Activated CD4-positive, alpha-beta memory T cell treated with anti-CD3 and anti-CD28 coated beads for 36 hours (primary cell): ENCODE measurements at regions of chr6 and their contacts with region 1.

Region 1: DNA sequence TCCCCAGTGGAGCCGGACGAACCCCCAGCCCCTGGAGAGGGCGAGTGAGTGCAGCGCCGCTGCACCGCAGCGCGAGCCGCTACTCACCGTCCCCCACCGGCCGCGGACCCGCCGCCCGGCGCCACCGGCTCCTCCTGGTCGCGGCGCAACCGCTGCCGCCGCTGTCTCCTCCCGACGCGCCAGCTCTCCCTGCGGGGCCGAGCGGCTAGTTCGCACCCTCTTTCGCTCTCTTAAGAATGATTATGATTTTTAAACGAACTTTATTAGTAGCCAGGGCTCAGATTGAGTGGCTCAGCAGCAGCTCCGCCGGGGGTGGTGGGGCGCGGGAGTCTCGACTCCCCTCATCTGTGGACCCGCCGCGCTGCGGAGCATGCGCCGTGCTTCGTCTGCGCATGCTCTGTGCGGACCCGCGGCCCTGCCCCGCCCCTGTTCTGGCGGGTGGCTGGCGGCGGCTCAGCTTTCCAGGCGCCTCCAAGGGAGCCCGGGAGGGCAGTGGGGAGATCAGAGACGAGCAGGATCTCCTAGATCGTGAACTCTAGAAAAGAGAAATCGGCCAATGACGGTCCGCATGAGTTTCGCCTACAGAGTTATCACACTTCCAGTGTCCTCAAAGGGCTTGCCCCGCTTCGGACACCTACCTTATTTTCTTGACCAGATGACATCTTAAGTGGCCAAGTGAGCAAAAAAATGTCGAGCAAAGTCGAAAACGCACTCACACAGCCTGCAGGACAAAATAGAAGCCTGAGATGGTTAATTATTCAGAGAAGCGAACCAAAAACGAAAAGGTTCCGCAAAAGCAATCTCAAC is at the start of gene RAB23:
- DNase-seq: peak; percentile 85
- H3K4me3 Mint-ChIP-seq: peak within 1 kb of the TSS; percentile 98
- H3K27ac Mint-ChIP-seq: peak within 1 kb of the TSS; percentile 77
- H3K4me1 Mint-ChIP-seq: peaks cover 10% of the 10 kb centered on the region
- H3K27me3 Mint-ChIP-seq: peaks cover 16% of the 10 kb centered on the region
- total RNA-seq, gene RAB23: 1.7 to 2.2 TPM

Region 2: GRCh38 chr6:56955171-56956045 is 266.7 kb before region 1 on chr6:
- CTCF ChIA-PET with region 1: interaction called, 4 read pairs
- POLR2A ChIA-PET with region 1: no interaction called
- intact Hi-C with region 1: loop called (anchors 2 kb)
- DNase-seq: peak; percentile 81
- H3K4me3 Mint-ChIP-seq: peak overlapping the region; percentile 72
- H3K27ac Mint-ChIP-seq: no peak overlapping the region
- H3K4me1 Mint-ChIP-seq: peaks cover 21% of the 10 kb centered on the region
- H3K27me3 Mint-ChIP-seq: peaks cover 45% of the 10 kb centered on the region

Region 3: DNA sequence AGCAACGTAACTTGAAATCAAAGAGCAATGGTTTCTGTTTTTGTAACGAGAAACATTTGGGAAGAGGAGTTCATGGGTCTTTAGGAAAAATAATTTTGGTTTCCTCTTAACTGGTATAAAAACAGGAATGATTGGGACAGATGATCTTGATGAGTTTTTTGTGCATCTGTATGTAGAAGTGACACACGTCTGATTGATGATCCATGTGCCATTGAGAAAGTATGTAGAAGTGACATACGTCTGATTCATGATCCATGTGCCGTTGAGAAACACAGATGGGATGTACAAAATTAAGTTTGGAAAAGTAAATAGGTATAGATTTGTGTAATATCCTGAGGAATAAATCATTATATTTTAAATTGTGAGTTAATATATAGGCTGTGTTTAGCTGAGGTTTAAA is 173.6 kb before region 1 on chr6:
- CTCF ChIA-PET with region 1: no interaction called
- POLR2A ChIA-PET with region 1: interaction called, 5 read pairs
- intact Hi-C with region 1: loop called (anchors 5 kb)
- DNase-seq: no peak
- H3K4me3 Mint-ChIP-seq: peak overlapping the region; percentile 64
- H3K27ac Mint-ChIP-seq: no peak overlapping the region
- H3K4me1 Mint-ChIP-seq: peaks cover 19% of the 10 kb centered on the region
- H3K27me3 Mint-ChIP-seq: peaks cover 10% of the 10 kb centered on the region

Region 4: GRCh38 chr6:57089687-57090460 is 132.3 kb before region 1 on chr6 and contains the start of gene ZNF451:
- CTCF ChIA-PET with region 1: no interaction called
- POLR2A ChIA-PET with region 1: no interaction called
- intact Hi-C with region 1: loop called (anchors 2 kb)
- DNase-seq: peak; percentile 99
- H3K4me3 Mint-ChIP-seq: peak within 1 kb of the TSS; percentile 85
- H3K27ac Mint-ChIP-seq: peak within 1 kb of the TSS; percentile 92
- H3K4me1 Mint-ChIP-seq: peaks cover 30% of the 10 kb centered on the region
- H3K27me3 Mint-ChIP-seq: no peaks in the 10 kb centered on the region
- total RNA-seq, gene ZNF451: 38.2 to 41.4 TPM

Region 5: DNA sequence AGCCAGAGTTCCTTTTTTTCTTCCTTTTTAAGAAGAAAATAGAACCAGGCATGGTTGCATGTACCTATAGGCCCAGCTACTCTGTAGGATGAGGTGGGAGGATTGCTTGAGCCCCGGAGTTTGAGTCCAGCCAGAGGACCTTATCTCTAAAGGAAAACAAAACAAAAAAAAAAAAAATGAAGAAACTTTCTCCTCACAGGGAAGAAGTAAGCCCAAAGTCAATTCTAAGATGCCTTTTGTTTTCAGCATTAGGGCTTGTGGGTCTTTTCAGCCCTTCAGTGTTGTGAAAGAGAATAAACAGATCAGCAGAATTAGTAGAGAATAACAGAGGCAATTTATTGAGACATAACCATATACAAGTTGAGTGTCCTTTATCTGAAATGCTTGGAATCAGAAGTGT is 105.4 kb before region 1 on chr6:
- CTCF ChIA-PET with region 1: no interaction called
- POLR2A ChIA-PET with region 1: no interaction called
- intact Hi-C with region 1: no loop called
- DNase-seq: no peak
- H3K4me3 Mint-ChIP-seq: no peak overlapping the region
- H3K27ac Mint-ChIP-seq: no peak overlapping the region
- H3K4me1 Mint-ChIP-seq: peaks cover 16% of the 10 kb centered on the region
- H3K27me3 Mint-ChIP-seq: no peaks in the 10 kb centered on the region

Region 6: DNA sequence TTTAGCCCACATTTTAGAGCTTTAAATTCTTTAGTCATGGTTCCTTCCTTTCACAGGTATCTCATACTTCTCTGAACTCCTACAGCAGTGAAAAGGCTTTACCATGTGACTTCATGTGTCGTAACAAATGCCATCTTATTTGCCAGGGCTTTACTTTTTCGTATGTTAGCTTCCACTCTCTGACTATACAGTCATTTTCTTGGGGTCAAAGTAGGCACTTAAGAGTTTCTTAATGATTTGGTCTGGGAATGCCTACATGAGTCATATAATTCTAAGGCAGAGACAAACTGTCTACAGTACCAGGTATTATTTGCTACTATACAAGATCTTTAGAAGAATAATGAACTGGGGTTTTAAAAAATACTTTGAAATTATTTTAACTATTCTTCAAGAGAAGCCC is 15.0 kb before region 1 on chr6:
- CTCF ChIA-PET with region 1: interaction called, 10 read pairs
- POLR2A ChIA-PET with region 1: interaction called, 3 read pairs
- intact Hi-C with region 1: loop called (anchors 2 kb)
- DNase-seq: no peak
- H3K4me3 Mint-ChIP-seq: no peak overlapping the region
- H3K27ac Mint-ChIP-seq: no peak overlapping the region
- H3K4me1 Mint-ChIP-seq: peaks cover 16% of the 10 kb centered on the region
- H3K27me3 Mint-ChIP-seq: no peaks in the 10 kb centered on the region

Region 7: DNA sequence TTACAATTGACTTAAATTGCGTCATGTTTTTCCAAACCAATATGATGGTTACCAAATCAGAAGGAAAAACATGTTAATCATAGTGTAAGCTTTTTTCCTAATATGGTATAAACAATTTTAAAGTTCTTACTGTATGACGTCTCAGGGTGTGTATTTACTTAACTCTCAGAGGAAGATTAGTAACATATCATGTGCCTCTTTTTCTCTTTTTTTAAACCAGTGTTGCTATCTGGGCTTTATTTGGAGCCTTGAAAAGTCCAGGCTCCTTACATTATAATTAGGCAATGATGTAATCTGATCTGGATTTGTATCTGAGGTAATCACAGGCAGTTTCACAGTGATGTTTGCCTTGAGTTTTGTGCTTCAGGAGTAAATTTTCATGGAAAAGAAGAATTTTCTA is 20.4 kb after region 1 on chr6:
- CTCF ChIA-PET with region 1: no interaction called
- POLR2A ChIA-PET with region 1: no interaction called
- intact Hi-C with region 1: no loop called
- DNase-seq: no peak
- H3K4me3 Mint-ChIP-seq: no peak overlapping the region
- H3K27ac Mint-ChIP-seq: no peak overlapping the region
- H3K4me1 Mint-ChIP-seq: no peaks in the 10 kb centered on the region
- H3K27me3 Mint-ChIP-seq: peaks cover 13% of the 10 kb centered on the region

Region 8: DNA sequence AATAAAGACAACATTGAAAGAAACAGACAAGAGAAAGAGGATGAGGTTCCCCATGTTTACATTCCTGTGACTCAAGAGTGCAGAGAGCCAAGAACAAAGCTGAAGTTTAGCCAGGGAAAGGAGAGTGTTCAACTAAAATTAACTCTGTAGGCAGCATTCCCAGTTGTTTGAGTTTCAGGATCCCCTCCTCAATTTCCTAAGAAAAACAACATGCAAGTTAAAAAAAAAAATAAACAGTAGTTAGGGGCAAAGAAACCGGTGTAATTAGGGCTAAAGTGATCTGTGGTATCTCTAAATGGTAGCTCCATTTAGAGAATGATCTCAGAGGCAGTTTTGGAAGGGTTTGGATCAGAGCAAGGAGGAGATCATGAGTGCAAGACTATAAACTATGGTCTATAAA is 30.8 kb after region 1 on chr6:
- CTCF ChIA-PET with region 1: no interaction called
- POLR2A ChIA-PET with region 1: no interaction called
- intact Hi-C with region 1: no loop called
- DNase-seq: no peak
- H3K4me3 Mint-ChIP-seq: no peak overlapping the region
- H3K27ac Mint-ChIP-seq: no peak overlapping the region
- H3K4me1 Mint-ChIP-seq: no peaks in the 10 kb centered on the region
- H3K27me3 Mint-ChIP-seq: no peaks in the 10 kb centered on the region

Region 9: DNA sequence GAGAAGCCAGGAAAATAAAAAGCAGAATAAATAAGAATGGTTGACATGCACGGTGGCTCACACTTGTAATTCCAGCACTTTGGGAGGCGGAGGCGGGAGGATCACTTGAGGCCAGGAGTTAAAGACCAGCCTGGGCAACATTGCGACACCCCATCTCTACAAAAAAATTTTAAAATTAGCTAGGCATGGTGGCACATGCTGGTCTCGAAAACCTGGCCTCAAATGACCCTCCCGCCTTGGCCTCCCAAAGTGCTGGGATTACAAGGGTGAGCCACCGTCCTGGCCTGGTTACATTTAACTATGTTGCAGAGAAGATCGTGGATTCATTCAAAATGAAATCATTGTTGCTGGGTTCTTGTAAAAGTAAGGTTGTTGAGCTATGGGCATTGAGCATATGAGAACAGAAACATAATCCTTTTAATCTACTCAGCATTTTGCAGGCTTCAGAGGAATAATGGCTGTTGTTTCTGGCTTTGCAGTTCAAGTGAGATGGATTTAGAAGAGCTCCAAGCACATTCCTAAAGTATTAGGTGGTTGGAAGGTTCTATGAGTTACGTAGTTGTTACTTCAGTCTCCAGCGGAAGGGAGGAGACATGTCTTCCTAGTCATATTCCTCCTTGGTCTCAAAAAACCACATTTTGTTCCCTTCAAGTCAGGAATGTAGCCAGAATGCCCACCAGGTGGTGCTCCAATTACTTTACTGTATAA is 45.6 kb after region 1 on chr6:
- CTCF ChIA-PET with region 1: interaction called, 4 read pairs
- POLR2A ChIA-PET with region 1: no interaction called
- intact Hi-C with region 1: loop called (anchors 5 kb)
- DNase-seq: peak; percentile 50
- H3K4me3 Mint-ChIP-seq: no peak overlapping the region
- H3K27ac Mint-ChIP-seq: no peak overlapping the region
- H3K4me1 Mint-ChIP-seq: peaks cover 11% of the 10 kb centered on the region
- H3K27me3 Mint-ChIP-seq: peaks cover 12% of the 10 kb centered on the region

Region 10: DNA sequence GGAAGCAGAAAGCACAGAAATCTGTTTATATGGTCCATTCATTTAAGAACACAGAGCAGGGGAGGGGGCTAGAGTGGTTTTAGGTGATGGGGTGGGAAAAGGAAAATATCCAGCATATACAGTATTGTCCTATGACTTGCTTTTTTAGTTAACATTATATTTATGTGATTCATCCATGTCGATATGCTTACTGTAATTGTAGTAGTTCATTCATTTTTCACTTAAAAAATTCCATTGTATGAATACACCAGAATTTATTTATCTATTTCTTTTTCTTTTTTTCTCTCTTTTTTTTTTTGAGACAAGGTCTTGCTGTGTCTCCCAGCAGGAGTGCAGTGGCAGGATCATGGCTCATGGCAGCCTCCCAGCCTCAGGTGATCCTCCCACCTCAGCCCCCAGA is 85.7 kb after region 1 on chr6:
- CTCF ChIA-PET with region 1: no interaction called
- POLR2A ChIA-PET with region 1: no interaction called
- intact Hi-C with region 1: no loop called
- DNase-seq: no peak
- H3K4me3 Mint-ChIP-seq: no peak overlapping the region
- H3K27ac Mint-ChIP-seq: no peak overlapping the region
- H3K4me1 Mint-ChIP-seq: no peaks in the 10 kb centered on the region
- H3K27me3 Mint-ChIP-seq: peaks cover 16% of the 10 kb centered on the region